H1 (cell line): ENCODE measurements at regions of chr22 and their contacts with region 1.

Region 1: DNA sequence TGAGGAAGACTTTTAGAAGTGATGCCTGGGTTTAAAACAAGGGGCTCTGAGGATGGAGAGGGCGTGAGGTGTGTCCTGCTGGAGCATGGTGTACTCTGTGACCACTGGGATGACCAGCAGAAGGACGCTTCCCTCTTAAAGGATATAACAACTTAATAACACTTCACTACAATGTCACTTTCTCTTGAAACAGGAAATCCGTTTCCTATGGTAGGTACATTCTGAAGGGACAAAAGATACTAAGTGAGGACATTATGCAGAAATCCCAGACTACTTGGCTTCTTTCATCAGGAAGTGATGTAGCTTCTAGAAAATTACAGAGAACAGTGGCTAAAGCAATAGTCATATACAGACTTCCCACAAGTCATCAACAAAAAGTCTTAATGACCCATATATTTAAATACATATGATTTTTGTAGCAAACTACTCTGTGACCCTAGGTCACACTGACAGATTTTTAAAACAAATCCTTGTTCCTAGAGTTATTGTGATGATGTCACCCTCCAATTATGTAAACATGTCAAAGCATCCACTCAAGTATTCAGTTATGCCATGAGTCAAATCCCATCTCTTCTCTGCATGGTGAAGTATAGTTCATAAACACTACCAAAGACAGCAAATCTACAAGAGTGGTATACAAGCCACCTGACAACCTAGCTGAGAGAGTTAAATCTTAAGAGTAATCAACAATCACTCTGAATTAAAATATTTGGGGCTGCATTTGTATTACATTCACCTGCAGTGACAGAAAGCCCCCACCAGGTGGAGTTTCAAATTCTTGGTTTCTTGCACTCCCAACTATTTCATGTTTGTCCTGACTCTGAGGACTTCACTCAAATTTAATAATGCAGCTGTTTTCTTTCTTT is 32.8 kb downstream of the PITPNB start:
- DNase-seq: peak in 1 of 2 experiments; percentile 57
- H3K4me3 ChIP-seq: no peak overlapping the region
- H3K27ac ChIP-seq: no peak overlapping the region
- H3K4me1 ChIP-seq: peaks cover 3 to 12% (median 8%) of the 10 kb centered on the region in 4 experiments
- H3K27me3 ChIP-seq: no peaks in the 10 kb centered on the region
- CTCF ChIP-seq: peak in 2 of 3 experiments; percentile 58 to 59; a peak in 3 of 4 replicates
- EP300 ChIP-seq: no peak
- POLR2A ChIP-seq: no peak
- RAD21 ChIP-seq: peak; percentile 41 to 56

Region 2: GRCh38 chr22:27642104-27642800 is 244.0 kb before region 1 on chr22:
- CTCF ChIA-PET with region 1: no interaction called
- POLR2A ChIA-PET with region 1: no interaction called
- DNase-seq: no peak
- H3K4me3 ChIP-seq: no peak overlapping the region
- H3K27ac ChIP-seq: no peak overlapping the region
- H3K4me1 ChIP-seq: peaks cover 9 to 36% (median 23%) of the 10 kb centered on the region in 4 experiments
- H3K27me3 ChIP-seq: no peaks in the 10 kb centered on the region; a peak in 1 of 7 replicates
- CTCF ChIP-seq: no peak
- EP300 ChIP-seq: no peak
- POLR2A ChIP-seq: no peak
- RAD21 ChIP-seq: no peak

Region 3: GRCh38 chr22:27913162-27913741 is 27.0 kb after region 1 on chr22:
- CTCF ChIA-PET with region 1: interaction called, 10 read pairs
- POLR2A ChIA-PET with region 1: no interaction called
- DNase-seq: no peak
- H3K4me3 ChIP-seq: no peak overlapping the region
- H3K27ac ChIP-seq: no peak overlapping the region
- H3K4me1 ChIP-seq: peaks cover 2 to 3% (median 3%) of the 10 kb centered on the region in 4 experiments; a peak in 6 of 7 replicates
- H3K27me3 ChIP-seq: no peaks in the 10 kb centered on the region
- CTCF ChIP-seq: no peak
- EP300 ChIP-seq: no peak
- POLR2A ChIP-seq: no peak
- RAD21 ChIP-seq: no peak

Region 4: GRCh38 chr22:27980424-27981148 is 94.4 kb after region 1 on chr22:
- CTCF ChIA-PET with region 1: interaction called, 15 read pairs
- POLR2A ChIA-PET with region 1: no interaction called
- DNase-seq: peak in 1 of 2 experiments; percentile 70
- H3K4me3 ChIP-seq: no peak overlapping the region
- H3K27ac ChIP-seq: no peak overlapping the region
- H3K4me1 ChIP-seq: peaks cover 0 to 6% (median 5%) of the 10 kb centered on the region in 4 experiments; a peak in 5 of 7 replicates
- H3K27me3 ChIP-seq: no peaks in the 10 kb centered on the region
- CTCF ChIP-seq: no peak
- EP300 ChIP-seq: no peak
- POLR2A ChIP-seq: no peak
- RAD21 ChIP-seq: no peak

Region 5: GRCh38 chr22:28002181-28002700 is 116.0 kb after region 1 on chr22:
- CTCF ChIA-PET with region 1: interaction called, 84 read pairs
- POLR2A ChIA-PET with region 1: interaction called, 3 read pairs
- DNase-seq: no peak
- H3K4me3 ChIP-seq: no peak overlapping the region
- H3K27ac ChIP-seq: no peak overlapping the region
- H3K4me1 ChIP-seq: no peaks in the 10 kb centered on the region
- H3K27me3 ChIP-seq: no peaks in the 10 kb centered on the region
- CTCF ChIP-seq: no peak
- EP300 ChIP-seq: no peak
- POLR2A ChIP-seq: no peak
- RAD21 ChIP-seq: no peak